ENCODE measurements at regions of chr18 and their contacts with region 1.

Region 1: GRCh38 chr18:5073026-5073944 is 123.8 kb downstream of the AKAIN1 start:
- DNase-seq: peak; percentile 57
- ATAC-seq: peak; percentile 90
- H3K4me3 ChIP-seq: no peak overlapping the region
- H3K27ac ChIP-seq: no peak overlapping the region
- H3K4me1 ChIP-seq: no peaks in the 10 kb centered on the region
- H3K27me3 ChIP-seq: no peaks in the 10 kb centered on the region
- CTCF ChIP-seq: peak; percentile 63; the same call in 1 of the 2 replicates

Region 2: GRCh38 chr18:4858378-4859127 is 214.7 kb before region 1 on chr18:
- CTCF ChIA-PET with region 1: no interaction called
- POLR2A ChIA-PET with region 1: no interaction called
- intact Hi-C with region 1: no loop called
- DNase-seq: no peak
- ATAC-seq: no peak
- H3K4me3 ChIP-seq: no peak overlapping the region
- H3K27ac ChIP-seq: no peak overlapping the region
- H3K4me1 ChIP-seq: no peaks in the 10 kb centered on the region
- H3K27me3 ChIP-seq: no peaks in the 10 kb centered on the region
- CTCF ChIP-seq: no peak

Region 3: DNA sequence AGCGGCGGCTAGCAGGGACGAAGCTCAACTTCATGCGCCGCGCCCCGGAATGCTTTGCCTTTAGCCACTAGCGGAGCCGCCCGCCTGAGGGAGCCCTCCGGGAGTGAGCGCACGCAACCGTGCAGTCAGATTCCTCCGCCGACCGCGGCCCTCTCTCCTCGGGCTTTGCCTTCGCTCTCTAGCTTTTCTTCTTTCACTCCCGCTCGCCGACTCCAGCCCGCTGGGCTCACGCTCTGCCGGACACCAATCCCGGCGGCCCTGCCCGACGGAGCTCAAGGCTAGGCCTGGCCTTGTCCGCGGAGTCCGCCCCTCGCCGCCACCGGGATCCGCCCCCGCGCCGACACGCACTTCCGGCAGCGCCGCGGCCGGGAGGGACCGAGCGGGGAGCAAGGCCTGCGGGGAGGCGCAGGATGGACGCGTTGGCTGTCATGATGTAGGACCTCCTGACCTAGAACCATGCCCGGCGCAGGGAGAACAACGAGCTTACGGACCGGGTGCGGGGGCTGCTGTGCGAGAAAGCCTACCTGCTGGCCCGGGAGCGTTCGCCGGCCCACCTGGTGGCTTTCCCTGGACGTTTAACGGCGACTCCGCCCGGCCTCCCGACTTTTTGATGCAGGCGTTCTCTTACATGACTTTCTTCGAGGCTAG is 164.6 kb after region 1 on chr18:
- CTCF ChIA-PET with region 1: no interaction called
- POLR2A ChIA-PET with region 1: no interaction called
- intact Hi-C with region 1: loop called (anchors 5 kb)
- DNase-seq: peak; percentile 80
- ATAC-seq: peak; percentile 86
- H3K4me3 ChIP-seq: peak overlapping the region; percentile 84
- H3K27ac ChIP-seq: peak overlapping the region; percentile 92
- H3K4me1 ChIP-seq: peaks cover 30% of the 10 kb centered on the region
- H3K27me3 ChIP-seq: no peaks in the 10 kb centered on the region
- CTCF ChIP-seq: no peak

Region 4: GRCh38 chr18:5600378-5601071 is 527.2 kb after region 1 on chr18:
- CTCF ChIA-PET with region 1: no interaction called
- POLR2A ChIA-PET with region 1: no interaction called
- intact Hi-C with region 1: loop called (anchors 10 kb)
- DNase-seq: peak; percentile 39
- ATAC-seq: peak; percentile 53; the same call in 1 of the 2 replicates
- H3K4me3 ChIP-seq: no peak overlapping the region
- H3K27ac ChIP-seq: no peak overlapping the region
- H3K4me1 ChIP-seq: no peaks in the 10 kb centered on the region
- H3K27me3 ChIP-seq: no peaks in the 10 kb centered on the region
- CTCF ChIP-seq: peak; percentile 67

Region 5: GRCh38 chr18:5841518-5841917 is 768.2 kb after region 1 on chr18:
- CTCF ChIA-PET with region 1: no interaction called
- POLR2A ChIA-PET with region 1: no interaction called
- intact Hi-C with region 1: loop called (anchors 1 kb)
- DNase-seq: no peak
- ATAC-seq: peak; percentile 40; the same call in 1 of the 2 replicates
- H3K4me3 ChIP-seq: no peak overlapping the region
- H3K27ac ChIP-seq: no peak overlapping the region
- H3K4me1 ChIP-seq: no peaks in the 10 kb centered on the region
- H3K27me3 ChIP-seq: peaks cover 34% of the 10 kb centered on the region
- CTCF ChIP-seq: peak; percentile 42

Measured in PC-3 (cell line).